Lower lobe of right lung (tissue), 2 donors: ENCODE measurements at regions of chr15 and their contacts with region 1.

Region 1: DNA sequence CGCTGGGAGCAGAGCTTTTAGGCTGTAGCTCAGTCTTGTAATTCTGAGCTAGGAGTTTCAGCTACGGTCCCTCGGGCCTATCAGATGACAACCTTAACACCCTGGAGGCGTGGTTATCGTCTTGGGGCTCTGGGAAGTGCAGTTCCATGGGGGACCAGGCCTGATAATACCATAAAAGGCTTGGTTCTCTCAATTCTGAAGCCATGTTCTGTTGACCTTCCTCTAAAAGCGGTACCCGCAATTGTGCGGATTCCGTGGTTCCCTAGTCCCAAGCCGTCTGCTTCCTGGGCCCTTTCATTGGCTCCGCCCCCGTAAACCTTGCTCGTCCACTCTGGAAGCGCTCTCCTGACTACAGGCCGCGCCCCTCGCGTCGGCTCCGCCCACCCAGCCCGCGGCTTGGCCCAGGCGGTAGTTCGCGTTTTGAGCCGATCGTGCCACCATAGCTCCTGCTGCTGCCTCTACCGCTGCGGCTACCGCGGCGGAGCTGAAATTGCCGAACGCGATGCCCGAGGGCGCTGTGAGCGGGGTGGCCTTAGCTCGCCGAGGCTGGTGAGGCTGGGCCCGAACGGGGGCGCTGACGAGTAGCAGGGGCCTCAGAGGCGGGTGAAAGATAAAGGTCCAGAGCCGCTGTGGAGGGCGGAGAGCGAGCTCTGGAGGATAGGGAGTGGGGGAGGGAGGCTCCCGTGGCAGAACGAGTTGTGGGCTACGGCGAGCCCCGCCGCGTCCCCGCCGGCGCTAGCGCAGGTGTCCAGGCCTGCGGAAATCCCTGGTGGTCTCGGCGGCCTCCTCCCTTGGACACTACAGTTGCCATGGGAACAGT is at the start of gene MAPKBP1:
- DNase-seq: peak; percentile 99
- ATAC-seq: peak; percentile 98 to 99
- H3K4me3 ChIP-seq: peak within 1 kb of the TSS; percentile 85
- H3K27ac ChIP-seq: peak within 1 kb of the TSS; percentile 81
- H3K4me1 ChIP-seq: peaks cover 39% of the 10 kb centered on the region
- H3K27me3 ChIP-seq: no peaks in the 10 kb centered on the region
- CTCF ChIP-seq: peak; percentile 76
- total RNA-seq, gene MAPKBP1: 17.0 TPM

Region 2: DNA sequence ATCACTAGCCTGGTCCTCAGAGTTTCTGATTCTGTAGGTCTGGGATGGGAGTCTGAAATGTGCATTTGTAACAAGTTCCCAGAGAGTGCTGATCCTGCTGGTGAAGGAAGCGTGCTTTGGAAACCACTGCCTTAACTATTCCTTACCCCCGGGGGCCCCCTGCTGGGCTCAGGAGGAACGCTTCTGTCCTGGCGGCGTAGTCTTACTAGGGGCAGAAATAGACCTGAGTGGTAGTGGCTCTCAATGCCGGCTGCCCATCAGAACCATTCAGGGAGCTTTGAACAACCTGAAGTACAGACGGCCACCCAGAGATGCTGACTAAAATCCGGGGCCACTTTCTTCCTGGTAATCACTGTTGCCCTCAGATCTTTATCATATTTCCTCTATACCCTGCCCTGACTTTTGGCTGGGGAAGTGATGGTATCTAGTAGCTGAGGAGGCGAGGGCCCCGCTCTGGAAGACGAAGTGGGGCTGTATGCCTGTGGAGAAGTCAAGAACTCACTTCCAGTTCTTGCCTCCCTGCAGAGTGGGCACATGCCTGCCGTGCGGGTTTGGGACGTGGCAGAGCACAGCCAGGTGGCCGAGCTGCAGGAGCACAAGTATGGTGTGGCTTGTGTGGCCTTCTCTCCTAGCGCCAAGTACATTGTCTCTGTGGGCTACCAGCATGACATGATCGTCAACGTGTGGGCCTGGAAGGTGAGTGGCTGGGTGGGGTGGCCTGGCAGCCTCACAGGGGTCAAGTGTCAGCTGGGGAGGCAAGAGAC is 37.3 kb after region 1 on chr15:
- intact Hi-C with region 1: loop called (anchors 5 kb)
- DNase-seq: peak; percentile 88
- ATAC-seq: peak; percentile 90 to 93
- H3K4me3 ChIP-seq: no peak overlapping the region
- H3K27ac ChIP-seq: no peak overlapping the region
- H3K4me1 ChIP-seq: no peaks in the 10 kb centered on the region
- H3K27me3 ChIP-seq: no peaks in the 10 kb centered on the region
- CTCF ChIP-seq: peak; percentile 91